PC-9 (cell line): ENCODE measurements at regions of chr2 and their contacts with region 1.

Region 1: GRCh38 chr2:65129826-65130663 is at the start of gene RAB1A:
- DNase-seq: peak; percentile 97 to 99
- H3K4me3 ChIP-seq: peak within 1 kb of the TSS; percentile 75
- H3K27ac ChIP-seq: peak within 1 kb of the TSS; percentile 87
- H3K4me1 ChIP-seq: peaks cover 33% of the 10 kb centered on the region
- H3K27me3 ChIP-seq: no peaks in the 10 kb centered on the region
- CTCF ChIP-seq: peak; percentile 52; the same call in 1 of the 2 replicates
- total RNA-seq, gene RAB1A: 110 and 165 TPM in 2 replicates

Region 2: DNA sequence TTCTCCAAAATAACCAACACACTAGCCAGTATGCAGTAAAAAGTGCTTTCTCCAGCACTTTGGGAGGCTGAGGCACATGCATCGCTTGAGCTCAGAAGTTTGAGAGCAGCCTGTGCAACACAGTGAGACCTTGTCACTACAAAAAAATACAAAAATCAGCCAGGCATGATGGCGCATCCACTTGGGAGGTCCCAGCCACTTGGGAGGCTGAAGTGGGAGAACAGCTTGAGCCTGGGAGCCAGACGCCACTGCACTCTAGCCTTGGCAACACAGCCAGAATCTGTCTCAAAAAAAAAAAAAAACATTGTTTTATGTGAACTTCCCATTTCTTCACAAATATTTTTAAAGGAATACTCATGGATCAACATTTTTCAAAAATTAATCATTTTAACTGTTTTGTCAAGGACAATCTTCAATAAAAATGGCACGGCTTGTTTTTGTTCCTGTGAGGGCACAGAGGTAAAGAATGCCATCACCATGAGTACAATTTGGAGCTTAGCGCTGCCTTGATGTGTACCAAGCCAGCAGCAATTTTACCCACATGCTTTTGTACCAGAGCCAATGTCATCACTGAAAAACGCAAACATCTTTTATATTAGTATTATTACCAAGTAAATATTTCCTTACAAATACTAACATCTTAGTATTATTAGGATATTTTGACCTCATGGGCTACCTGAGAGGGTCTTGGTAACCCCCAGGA is 26.9 kb before region 1 on chr2:
- CTCF ChIA-PET with region 1: interaction called, 17 read pairs
- POLR2A ChIA-PET with region 1: interaction called, 4 read pairs
- intact Hi-C with region 1: no loop called
- DNase-seq: no peak
- H3K4me3 ChIP-seq: no peak overlapping the region
- H3K27ac ChIP-seq: no peak overlapping the region
- H3K4me1 ChIP-seq: no peaks in the 10 kb centered on the region
- H3K27me3 ChIP-seq: no peaks in the 10 kb centered on the region
- CTCF ChIP-seq: no peak

Region 3: GRCh38 chr2:65256054-65256453 is 126.0 kb after region 1 on chr2:
- CTCF ChIA-PET with region 1: no interaction called
- POLR2A ChIA-PET with region 1: interaction called, 25 read pairs
- intact Hi-C with region 1: no loop called
- DNase-seq: no peak
- H3K4me3 ChIP-seq: no peak overlapping the region
- H3K27ac ChIP-seq: no peak overlapping the region
- H3K4me1 ChIP-seq: no peaks in the 10 kb centered on the region
- H3K27me3 ChIP-seq: no peaks in the 10 kb centered on the region
- CTCF ChIP-seq: peak; percentile 58